ENCODE measurements at regions of chr18 and their contacts with region 1.

Region 1: DNA sequence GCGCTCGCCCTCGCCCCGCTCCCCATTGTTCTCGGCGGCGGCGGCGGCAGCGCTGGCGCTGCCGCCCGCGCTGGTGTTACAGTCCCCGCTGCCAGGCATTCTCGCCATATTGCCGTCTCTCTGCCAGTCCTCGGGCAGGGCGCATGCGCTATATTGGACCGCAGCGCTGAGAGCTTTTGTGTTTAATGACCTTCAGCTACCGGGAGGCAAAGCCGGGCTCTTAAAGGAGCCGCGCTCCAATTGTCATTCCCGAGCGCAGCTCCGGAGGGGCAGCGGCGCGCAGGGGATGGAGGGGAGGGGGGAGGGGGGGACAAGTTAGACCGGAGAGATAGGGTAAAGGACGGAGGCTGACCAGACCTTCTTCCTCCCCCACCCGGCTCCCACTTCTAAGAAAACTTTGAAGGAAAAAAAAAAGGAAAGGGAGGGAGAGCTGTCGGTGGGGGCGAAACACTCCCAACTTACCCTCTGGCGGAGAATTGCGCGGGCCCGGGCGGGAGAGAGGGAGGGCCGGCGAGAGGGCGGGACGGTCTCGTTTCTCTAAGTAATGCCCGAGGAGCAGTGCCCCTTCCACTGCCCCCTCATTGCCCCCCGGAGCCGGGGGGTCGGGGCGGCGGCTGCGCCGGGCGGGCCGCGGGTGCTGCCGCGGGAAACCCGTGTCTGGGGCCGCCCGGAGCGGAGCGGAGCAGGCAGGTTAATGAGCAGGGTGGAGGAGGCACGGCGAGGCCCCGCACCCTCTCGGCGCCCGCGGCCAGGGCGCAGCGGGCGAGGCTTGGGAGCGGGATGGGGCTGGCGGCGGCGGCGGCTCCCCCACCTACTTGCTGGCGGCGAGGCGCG is at the start of gene KCTD1:
- DNase-seq: peak; percentile 76 to 77
- ATAC-seq: peak; percentile 62 to 82 (median 72)
- H3K4me3 ChIP-seq: peak within 1 kb of the TSS; percentile 55 to 86 (median 75)
- H3K27ac ChIP-seq: peak within 1 kb of the TSS; percentile 20 to 84 (median 72)
- H3K4me1 ChIP-seq: peaks cover 10 to 66% (median 51%) of the 10 kb centered on the region in 9 donors
- H3K27me3 ChIP-seq: peaks cover 0 to 68% (median 21%) of the 10 kb centered on the region in 7 donors
- CTCF ChIP-seq: no peak
- total RNA-seq, gene KCTD1: 7.5 to 16.7 (median 11.5) TPM

Region 2: GRCh38 chr18:26383454-26384270 is 165.0 kb before region 1 on chr18:
- intact Hi-C with region 1: loop called in 2 of 10 experiments (anchors 5 to 10 kb)
- DNase-seq: no peak
- ATAC-seq: peak in 3 of 8 donors; percentile 47 to 56 (median 49)
- H3K4me3 ChIP-seq: no peak overlapping the region
- H3K27ac ChIP-seq: no peak overlapping the region
- H3K4me1 ChIP-seq: peaks cover 0 to 21% (median 10%) of the 10 kb centered on the region in 9 donors
- H3K27me3 ChIP-seq: no peaks in the 10 kb centered on the region
- CTCF ChIP-seq: peak; percentile 58 to 85 (median 77)

Region 3: GRCh38 chr18:26405190-26405801 is 143.3 kb before region 1 on chr18:
- intact Hi-C with region 1: loop called in 1 of 10 experiments (anchors 10 kb)
- DNase-seq: peak; percentile 33 to 41
- ATAC-seq: peak; percentile 65 to 90 (median 86)
- H3K4me3 ChIP-seq: no peak overlapping the region
- H3K27ac ChIP-seq: no peak overlapping the region
- H3K4me1 ChIP-seq: no peaks in the 10 kb centered on the region
- H3K27me3 ChIP-seq: no peaks in the 10 kb centered on the region
- CTCF ChIP-seq: peak; percentile 14 to 69 (median 55)

Region 4: DNA sequence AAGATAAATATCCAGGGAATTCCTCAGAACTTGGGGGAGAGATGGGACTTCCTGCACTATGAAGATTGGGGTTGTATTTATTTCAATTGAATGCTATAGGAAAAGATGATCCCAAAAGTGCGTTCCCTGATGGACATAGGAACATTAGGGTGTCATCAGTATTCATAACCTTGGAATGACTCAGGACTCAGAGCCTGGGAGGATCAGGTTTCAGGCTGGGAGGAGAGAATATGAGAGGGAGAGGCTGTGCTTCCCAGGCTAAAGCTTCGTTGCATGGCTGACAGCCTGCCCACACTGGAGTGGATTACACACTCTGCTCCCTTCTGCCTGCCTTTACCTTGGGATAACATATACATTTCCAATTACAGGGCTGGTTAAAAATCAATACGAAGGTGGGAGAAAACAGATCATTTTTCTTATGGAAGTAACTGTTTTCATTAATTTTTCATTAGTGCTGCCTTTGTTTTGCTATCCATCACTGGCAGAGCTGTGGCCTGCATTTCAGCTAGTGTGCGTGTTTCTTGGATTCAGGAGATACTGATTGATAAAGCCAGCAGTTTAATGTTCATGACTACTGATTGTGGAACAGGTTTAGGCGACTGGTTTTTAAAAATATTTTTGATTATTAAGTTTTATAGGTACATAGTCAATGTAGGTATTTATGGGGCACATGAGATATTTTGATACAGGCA is 119.0 kb before region 1 on chr18:
- intact Hi-C with region 1: loop called in 1 of 10 experiments (anchors 10 kb)
- DNase-seq: no peak
- ATAC-seq: peak in 3 of 8 donors; percentile 35 to 89 (median 62)
- H3K4me3 ChIP-seq: no peak overlapping the region
- H3K27ac ChIP-seq: no peak overlapping the region
- H3K4me1 ChIP-seq: no peaks in the 10 kb centered on the region
- H3K27me3 ChIP-seq: no peaks in the 10 kb centered on the region
- CTCF ChIP-seq: no peak

Region 5: GRCh38 chr18:26468931-26469340 is 79.7 kb before region 1 on chr18:
- intact Hi-C with region 1: loop called in 1 of 10 experiments (anchors 10 kb)
- DNase-seq: no peak
- ATAC-seq: no peak
- H3K4me3 ChIP-seq: no peak overlapping the region
- H3K27ac ChIP-seq: no peak overlapping the region
- H3K4me1 ChIP-seq: peaks cover 0 to 17% (median 3%) of the 10 kb centered on the region in 9 donors
- H3K27me3 ChIP-seq: no peaks in the 10 kb centered on the region
- CTCF ChIP-seq: peak in 7 of 9 donors; percentile 31 to 43 (median 39)

Region 6: GRCh38 chr18:26637324-26637723 is 88.7 kb after region 1 on chr18:
- intact Hi-C with region 1: loop called in 1 of 10 experiments (anchors 10 kb)
- DNase-seq: no peak
- ATAC-seq: no peak
- H3K4me3 ChIP-seq: no peak overlapping the region
- H3K27ac ChIP-seq: no peak overlapping the region
- H3K4me1 ChIP-seq: peaks cover 0 to 6% (median 0%) of the 10 kb centered on the region in 9 donors
- H3K27me3 ChIP-seq: peaks cover 0 to 4% (median 0%) of the 10 kb centered on the region in 7 donors
- CTCF ChIP-seq: no peak

Region 7: GRCh38 chr18:26656944-26657536 is 108.4 kb after region 1 on chr18:
- intact Hi-C with region 1: loop called in 4 of 10 experiments (anchors 5 to 10 kb)
- DNase-seq: peak; percentile 74 to 86
- ATAC-seq: peak; percentile 81 to 95 (median 86)
- H3K4me3 ChIP-seq: peak overlapping the region; percentile 60 to 85 (median 78)
- H3K27ac ChIP-seq: peak overlapping the region; percentile 81 to 95 (median 86)
- H3K4me1 ChIP-seq: peaks cover 2 to 27% (median 18%) of the 10 kb centered on the region in 9 donors
- H3K27me3 ChIP-seq: peaks cover 0 to 72% (median 6%) of the 10 kb centered on the region in 7 donors
- CTCF ChIP-seq: peak in 7 of 9 donors; percentile 15 to 67 (median 46)

Region 8: DNA sequence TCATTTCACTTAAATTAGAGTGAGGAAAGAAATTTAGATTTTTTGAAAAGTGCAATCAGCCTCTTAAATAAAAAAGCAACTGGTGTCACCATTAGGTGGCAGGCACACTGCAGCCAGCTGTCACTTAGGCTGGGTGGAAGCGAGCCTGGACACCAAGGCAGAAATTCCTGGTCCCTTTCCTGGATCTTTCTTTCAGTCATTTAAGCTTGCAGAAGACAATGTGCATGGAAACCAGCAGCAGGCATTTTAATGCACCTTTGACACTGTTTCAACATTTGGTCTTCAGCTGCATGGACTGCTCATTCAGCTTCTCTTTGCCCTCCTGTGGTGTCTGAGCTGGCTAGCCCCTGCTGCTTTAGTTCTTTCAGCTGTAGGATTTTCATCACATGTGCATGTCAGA is 255.9 kb after region 1 on chr18:
- intact Hi-C with region 1: no loop called
- DNase-seq: no peak
- ATAC-seq: peak in 3 of 8 donors; percentile 33 to 41 (median 37)
- H3K4me3 ChIP-seq: no peak overlapping the region
- H3K27ac ChIP-seq: no peak overlapping the region
- H3K4me1 ChIP-seq: no peaks in the 10 kb centered on the region
- H3K27me3 ChIP-seq: peaks cover 0 to 6% (median 0%) of the 10 kb centered on the region in 7 donors
- CTCF ChIP-seq: peak in 7 of 9 donors; percentile 39 to 59 (median 49)